Caco-2 (cell line): ENCODE measurements at regions of chr2 and their contacts with region 1.

Region 1: DNA sequence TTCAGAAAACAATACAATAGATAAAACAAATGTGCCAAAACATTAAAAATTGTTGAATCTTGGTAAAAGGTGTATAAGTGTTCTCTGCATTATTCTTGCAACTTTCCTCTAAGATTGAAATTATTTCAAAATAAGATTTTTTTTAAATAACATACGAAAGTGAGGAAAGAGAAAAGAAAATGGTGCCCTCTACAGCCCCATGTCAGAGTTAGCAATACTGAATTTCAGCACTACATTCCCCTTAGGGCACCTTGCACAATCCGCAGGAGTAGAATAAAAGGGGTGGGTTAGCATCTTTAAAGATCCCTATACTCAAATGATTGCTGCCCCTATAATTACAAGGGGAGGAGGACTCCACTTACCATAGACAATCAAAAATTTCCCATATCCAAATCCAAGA is 433.7 kb downstream of the BCL11A start:
- DNase-seq: no peak
- H3K4me3 ChIP-seq: no peak overlapping the region
- H3K4me3 Mint-ChIP-seq: no peak overlapping the region
- H3K27ac Mint-ChIP-seq: no peak overlapping the region
- H3K4me1 ChIP-seq: no peaks in the 10 kb centered on the region
- H3K4me1 Mint-ChIP-seq: peaks cover 2% of the 10 kb centered on the region
- H3K27me3 ChIP-seq: no peaks in the 10 kb centered on the region
- H3K27me3 Mint-ChIP-seq: no peaks in the 10 kb centered on the region
- CTCF ChIP-seq: no peak

Region 2: DNA sequence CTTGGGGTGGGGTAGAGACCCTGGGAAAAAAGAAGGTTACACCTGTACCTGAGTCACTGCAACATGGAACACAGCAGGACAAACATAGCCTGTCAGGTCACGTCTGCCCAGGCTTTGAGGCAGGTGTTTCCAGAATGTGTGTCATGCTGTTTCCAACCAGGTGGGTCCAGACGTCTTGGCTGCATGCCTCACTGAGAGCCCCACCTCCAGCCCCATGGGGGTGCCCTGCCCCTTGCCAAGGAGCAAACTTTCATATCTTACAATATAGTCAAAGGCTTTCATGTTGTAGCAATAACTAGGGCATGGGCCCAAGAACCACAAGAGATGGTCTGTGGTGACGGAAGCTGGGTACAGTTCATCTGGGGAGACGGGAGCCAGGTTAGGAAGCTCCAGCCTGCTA is 66.0 kb before region 1 on chr2:
- CTCF ChIA-PET with region 1: no interaction called
- POLR2A ChIA-PET with region 1: interaction called, 10 read pairs
- intact Hi-C with region 1: no loop called
- DNase-seq: no peak
- H3K4me3 ChIP-seq: no peak overlapping the region
- H3K4me3 Mint-ChIP-seq: no peak overlapping the region
- H3K27ac Mint-ChIP-seq: no peak overlapping the region
- H3K4me1 ChIP-seq: no peaks in the 10 kb centered on the region
- H3K4me1 Mint-ChIP-seq: peaks cover 11% of the 10 kb centered on the region
- H3K27me3 ChIP-seq: no peaks in the 10 kb centered on the region
- H3K27me3 Mint-ChIP-seq: no peaks in the 10 kb centered on the region
- CTCF ChIP-seq: no peak

Region 3: DNA sequence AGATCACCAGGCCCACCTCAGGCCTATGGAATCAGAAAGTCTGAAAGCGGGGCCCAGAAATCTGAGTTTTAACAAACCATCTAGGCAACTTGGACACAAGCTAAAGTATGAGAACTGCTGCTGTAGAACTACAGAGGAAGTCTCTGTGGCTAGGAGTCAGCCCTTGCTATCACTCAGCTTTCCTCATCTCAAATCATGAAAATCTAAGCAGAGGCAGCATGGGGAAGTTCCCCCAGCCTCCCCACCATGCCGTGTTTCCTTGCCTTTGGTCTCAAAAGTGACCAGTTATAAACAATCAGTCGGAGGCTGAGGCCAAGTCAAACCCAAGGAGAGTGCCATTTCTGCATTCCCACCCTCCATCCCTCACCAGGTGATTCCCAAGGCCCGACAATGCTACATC is 28.9 kb after region 1 on chr2:
- CTCF ChIA-PET with region 1: no interaction called
- POLR2A ChIA-PET with region 1: no interaction called
- intact Hi-C with region 1: no loop called
- DNase-seq: no peak
- H3K4me3 ChIP-seq: no peak overlapping the region
- H3K4me3 Mint-ChIP-seq: no peak overlapping the region
- H3K27ac Mint-ChIP-seq: no peak overlapping the region
- H3K4me1 ChIP-seq: no peaks in the 10 kb centered on the region
- H3K4me1 Mint-ChIP-seq: no peaks in the 10 kb centered on the region
- H3K27me3 ChIP-seq: no peaks in the 10 kb centered on the region
- H3K27me3 Mint-ChIP-seq: no peaks in the 10 kb centered on the region
- CTCF ChIP-seq: no peak